ENCODE measurements at regions of chr3 and their contacts with region 1.

Region 1: DNA sequence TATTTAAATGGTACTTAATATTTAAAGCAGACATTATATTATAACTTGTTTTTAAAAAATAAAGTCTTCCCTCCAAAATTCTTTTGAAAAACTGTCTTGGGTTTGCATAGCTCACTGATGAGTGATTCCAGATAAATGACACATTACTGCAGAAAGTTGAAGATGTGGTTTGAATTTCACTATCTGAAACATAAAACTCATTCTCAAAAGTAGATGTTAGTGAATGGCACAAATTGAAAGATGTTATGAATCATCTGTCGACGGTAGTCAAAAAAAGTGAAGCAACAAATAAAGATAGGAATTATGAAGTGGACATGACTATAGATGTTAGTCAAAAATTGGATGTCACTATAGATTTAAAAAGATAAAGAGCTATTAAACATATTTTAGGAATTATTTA is 280.5 kb downstream of the GAP43 start:
- DNase-seq: no peak
- ATAC-seq: no peak

Region 2: DNA sequence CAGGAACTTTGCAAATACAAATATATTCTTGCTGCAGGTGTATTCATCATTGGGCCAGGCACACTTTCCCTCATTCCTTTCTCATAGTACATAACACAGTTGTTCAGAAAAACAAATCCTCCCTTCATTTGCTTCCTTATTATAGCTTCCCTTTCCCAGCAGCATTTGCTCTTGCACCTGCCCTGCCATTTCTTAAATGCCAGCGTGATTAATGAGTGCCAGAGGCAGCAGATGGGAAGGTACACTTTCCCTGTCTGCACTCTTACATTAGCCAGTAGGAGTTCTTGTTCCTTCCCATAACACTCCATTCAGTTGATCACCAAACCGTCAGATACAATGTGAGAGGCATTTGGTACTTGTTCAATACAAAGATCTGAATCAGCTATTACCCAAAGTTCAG is 409.0 kb before region 1 on chr3:
- intact Hi-C with region 1: no loop called
- DNase-seq: no peak
- ATAC-seq: no peak

Region 3: DNA sequence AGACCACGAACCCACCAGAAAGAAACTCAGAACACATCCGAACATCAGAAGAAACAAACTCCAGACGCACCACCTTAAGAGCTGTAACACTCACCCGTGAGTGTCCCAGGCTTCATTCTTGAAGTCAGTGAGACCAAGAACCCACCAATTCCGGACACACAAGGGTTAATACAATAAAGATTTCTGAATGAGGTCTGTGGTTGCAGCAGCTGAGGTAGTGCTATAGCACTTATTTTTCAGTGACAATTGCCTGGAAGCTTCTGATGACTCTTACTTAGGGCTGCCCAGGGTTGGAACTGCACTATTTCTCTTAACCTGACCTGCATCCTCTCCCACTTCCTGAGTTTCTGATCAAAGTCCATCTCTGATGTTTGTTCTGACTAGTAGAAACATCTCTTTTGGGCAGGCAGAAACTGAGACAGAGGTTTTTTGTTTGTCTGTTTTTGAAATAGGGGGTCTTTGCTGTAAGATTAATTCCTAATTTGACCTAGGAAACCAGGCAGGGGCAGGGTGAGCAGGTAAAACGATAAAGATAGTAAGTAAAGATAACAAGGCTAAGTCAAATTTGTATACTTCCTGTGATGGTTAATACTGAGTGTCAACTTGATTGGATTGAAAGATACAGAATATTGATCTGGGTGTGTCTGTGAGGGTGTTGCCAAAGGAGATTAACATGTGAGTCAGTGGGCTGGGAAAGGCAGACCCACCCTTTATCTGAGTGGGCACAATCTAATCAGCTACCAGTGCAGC is 111.5 kb before region 1 on chr3:
- intact Hi-C with region 1: no loop called
- DNase-seq: no peak
- ATAC-seq: no peak

Region 4: DNA sequence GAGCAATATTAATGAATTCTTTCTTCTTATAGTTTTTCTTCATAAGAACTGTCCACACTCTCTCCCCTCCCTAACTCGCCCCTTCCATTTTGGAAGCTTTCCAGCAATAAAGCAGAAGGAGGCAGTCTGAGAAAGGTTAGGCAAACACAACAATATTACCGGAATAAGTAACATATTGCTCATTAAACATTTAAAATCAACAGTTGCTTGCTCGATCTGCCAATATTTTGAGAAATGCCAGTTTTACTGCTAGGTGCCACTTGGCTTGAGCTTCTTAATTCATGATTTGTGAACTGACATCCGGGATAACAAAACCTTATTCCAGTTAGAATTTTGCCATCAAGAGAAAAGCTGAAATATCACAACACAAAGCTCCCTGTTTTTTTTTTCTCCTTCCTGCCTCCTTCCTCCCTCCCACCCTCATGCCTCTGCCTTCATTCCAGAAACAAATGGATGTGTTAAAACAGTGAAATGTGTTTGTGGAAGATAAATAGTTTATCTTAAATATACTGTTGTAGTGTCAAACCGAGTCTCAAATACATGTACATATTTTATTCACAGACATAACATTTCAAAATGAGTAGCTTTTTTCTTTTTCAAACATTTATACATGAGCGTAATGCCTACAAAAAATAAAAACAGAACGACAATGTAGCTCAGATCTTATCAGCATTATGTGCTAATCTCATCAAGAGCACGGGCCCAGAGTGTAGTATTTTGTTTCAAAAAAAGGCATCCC is 26.8 kb before region 1 on chr3:
- intact Hi-C with region 1: loop called (anchors 1 kb)
- DNase-seq: no peak
- ATAC-seq: peak; percentile 53